Dendritic cell treated with granulocyte-macrophage colony-stimulating factor and Interleukin-4, amounts not matched to agents 40 ng/mL and 50 ng/mL, for 4 days (primary cell): ENCODE measurements at regions of chr18 and their contacts with region 1.

Region 1: GRCh38 chr18:64037812-64038414 is 68.0 kb downstream of the SERPINB8 start:
- H3K4me3 Mint-ChIP-seq: no peak overlapping the region
- H3K27ac Mint-ChIP-seq: no peak overlapping the region
- H3K4me1 Mint-ChIP-seq: no peaks in the 10 kb centered on the region
- H3K27me3 Mint-ChIP-seq: no peaks in the 10 kb centered on the region

Region 2: DNA sequence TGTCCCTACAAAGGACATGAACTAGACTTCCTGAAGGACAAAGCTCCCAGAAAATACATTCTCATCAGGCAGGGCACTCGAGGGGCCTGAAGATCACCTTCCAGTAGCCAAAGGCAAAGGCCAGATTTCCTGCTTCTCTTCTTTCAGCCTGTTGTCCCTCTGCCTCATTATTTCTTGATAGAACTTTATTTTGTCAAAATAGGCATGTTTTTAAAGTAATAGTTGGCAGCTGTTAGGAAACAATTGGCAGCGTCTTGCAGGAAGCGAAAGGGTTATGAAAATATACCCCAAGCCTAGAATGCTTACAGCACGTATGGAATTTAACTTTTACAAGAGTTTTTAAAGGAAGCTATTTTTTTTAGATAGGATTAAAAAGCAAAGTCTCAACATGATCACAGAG is 36.1 kb after region 1 on chr18:
- intact Hi-C with region 1: no loop called
- H3K4me3 Mint-ChIP-seq: no peak overlapping the region
- H3K27ac Mint-ChIP-seq: no peak overlapping the region
- H3K4me1 Mint-ChIP-seq: no peaks in the 10 kb centered on the region
- H3K27me3 Mint-ChIP-seq: no peaks in the 10 kb centered on the region

Region 3: GRCh38 chr18:64409511-64409910 is 371.6 kb after region 1 on chr18:
- intact Hi-C with region 1: loop called (anchors 10 kb)
- H3K4me3 Mint-ChIP-seq: no peak overlapping the region
- H3K27ac Mint-ChIP-seq: no peak overlapping the region
- H3K4me1 Mint-ChIP-seq: peaks cover 2% of the 10 kb centered on the region
- H3K27me3 Mint-ChIP-seq: no peaks in the 10 kb centered on the region

Region 4: DNA sequence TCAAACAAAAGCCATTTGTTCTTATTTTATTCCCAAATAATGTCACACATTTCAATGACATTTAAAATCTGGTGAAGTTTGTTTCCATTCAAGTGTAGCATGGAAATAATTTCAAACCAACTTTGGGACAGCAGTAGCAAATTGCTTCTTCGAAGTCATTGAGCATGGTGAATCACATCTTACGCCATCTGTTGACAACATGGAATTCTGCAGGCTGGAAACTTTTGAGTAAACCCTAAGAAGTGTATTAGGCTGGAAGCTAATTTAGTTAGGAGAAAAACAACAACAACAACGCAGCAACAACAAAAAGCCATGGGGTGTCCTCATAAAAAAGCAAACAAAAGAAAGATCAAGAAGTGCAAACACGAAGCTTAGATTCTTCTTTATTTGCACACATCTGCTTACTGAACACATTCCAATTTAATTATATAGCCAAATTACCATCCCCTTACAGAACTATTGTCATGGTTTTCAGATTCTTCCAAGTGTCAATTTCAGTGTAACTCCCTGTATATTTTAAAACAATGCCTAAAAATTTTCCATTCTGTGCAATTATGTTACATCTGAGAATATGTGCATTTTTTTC is 1053.9 kb after region 1 on chr18:
- intact Hi-C with region 1: loop called (anchors 5 kb)
- H3K4me3 Mint-ChIP-seq: no peak overlapping the region
- H3K27ac Mint-ChIP-seq: no peak overlapping the region
- H3K4me1 Mint-ChIP-seq: no peaks in the 10 kb centered on the region
- H3K27me3 Mint-ChIP-seq: no peaks in the 10 kb centered on the region